GM10248 (cell line): ENCODE measurements at regions of chr9 and their contacts with region 1.

Region 1: GRCh38 chr9:74773886-74774479 is 113.7 kb downstream of the TRPM6 start:
- DNase-seq: peak; percentile 57
- CTCF ChIP-seq: peak; percentile 92

Region 2: GRCh38 chr9:74277532-74277931 is 496.5 kb before region 1 on chr9:
- CTCF ChIA-PET with region 1: no interaction called
- POLR2A ChIA-PET with region 1: no interaction called
- DNase-seq: peak; percentile 46
- CTCF ChIP-seq: peak; percentile 2

Region 3: GRCh38 chr9:74760031-74760698 is 13.8 kb before region 1 on chr9:
- CTCF ChIA-PET with region 1: interaction called, 10 read pairs
- POLR2A ChIA-PET with region 1: no interaction called
- DNase-seq: no peak
- CTCF ChIP-seq: no peak

Region 4: GRCh38 chr9:75001719-75002422 is 227.9 kb after region 1 on chr9:
- CTCF ChIA-PET with region 1: interaction called, 166 read pairs
- POLR2A ChIA-PET with region 1: no interaction called
- DNase-seq: peak; percentile 35
- CTCF ChIP-seq: peak; percentile 51

Region 5: DNA sequence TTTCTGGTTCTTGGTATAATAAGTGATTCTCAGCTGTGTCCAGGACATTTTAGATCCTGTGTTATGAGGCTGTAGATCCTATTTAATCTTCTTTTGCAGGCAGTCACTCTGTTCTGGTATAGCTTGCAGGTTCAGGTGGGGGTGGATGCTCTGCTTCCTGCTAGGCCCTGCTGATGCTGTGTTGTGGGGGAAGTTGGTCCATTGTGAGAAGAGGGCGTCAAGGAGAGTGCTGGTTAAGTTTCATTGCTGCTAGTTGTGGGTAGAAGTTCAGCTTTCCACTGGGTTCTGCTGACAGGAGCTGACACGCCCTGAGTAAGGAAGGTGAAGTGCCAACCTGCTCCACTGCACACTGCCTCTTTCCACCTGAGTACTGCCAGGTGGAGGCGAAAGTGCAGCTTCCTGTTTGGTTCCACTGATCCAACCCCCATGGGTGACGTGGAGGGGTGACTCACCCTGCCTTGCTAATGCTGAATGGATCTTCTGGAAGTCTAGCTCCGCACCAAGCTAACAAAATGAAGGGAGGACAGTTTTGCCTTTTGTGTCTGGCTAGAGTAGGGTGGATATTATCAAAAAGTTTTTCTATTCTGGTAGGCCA is 297.6 kb after region 1 on chr9:
- CTCF ChIA-PET with region 1: interaction called, 112 read pairs
- POLR2A ChIA-PET with region 1: no interaction called
- DNase-seq: no peak
- CTCF ChIP-seq: no peak

Region 6: DNA sequence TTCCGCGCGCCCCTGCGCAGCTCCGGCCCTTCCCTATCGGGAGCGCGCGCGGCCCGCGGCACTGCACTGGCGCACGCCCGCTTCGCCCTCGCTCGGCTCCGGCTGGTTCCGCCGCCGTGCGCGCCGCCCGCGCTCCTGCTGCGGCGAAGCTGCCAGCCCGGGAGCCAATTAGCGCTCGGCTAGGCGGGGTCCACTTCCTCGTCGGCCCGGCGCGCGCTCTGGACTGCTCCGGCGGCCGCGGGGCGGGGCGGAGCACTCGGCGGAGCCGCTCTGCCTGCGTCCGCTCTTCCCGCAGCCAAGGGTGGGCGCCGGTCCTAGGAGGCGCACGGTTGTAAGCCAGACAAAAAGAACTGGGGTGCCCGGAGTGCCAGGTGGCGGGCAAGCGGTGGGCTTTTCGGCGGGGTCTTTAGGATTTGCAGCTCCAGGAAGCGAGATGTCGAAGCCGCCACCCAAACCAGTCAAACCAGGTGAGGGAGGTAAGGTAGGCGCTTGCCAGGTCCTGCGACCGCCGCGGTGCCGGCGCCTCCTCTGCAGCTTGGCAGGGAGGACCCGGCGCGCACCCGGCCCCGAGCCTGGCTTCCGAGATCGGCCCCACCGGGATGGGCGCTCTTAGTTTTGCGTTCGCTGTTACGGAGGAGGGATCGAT is 314.4 kb after region 1 on chr9 and contains the start of gene OSTF1:
- CTCF ChIA-PET with region 1: interaction called, 19 read pairs
- POLR2A ChIA-PET with region 1: no interaction called
- DNase-seq: peak; percentile 93
- CTCF ChIP-seq: no peak